ENCODE measurements at regions of chr3 and their contacts with region 1.

Region 1: DNA sequence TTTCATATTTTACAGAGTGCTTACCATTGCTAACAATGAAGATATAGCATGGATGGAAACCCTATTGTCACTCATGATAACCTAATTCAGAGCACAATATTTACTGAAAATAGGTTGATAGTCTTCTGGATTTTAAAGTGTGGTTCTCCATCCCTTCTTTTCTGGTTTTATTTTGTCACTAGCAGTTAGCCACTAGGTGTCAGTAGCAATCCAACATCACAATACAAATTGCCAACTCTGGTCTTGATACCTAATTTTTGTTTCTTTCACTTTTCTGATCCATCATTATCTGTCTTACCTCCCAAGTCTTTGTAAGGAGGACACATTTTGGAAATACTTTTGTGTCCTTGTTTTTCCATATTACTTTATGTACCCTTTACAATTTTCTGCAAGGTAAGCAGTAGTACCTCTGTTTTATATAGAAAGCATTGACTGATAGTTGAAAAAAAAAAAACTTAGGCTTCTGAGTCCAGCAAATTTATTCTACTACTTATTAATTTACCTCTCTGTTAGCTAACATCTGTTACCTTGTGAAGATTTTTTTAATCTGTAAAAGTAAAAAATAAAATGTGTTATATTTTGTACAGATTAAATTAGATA is 28.3 kb upstream of the CRYBG3 start:
- DNase-seq: peak; percentile 72
- H3K4me3 ChIP-seq: no peak overlapping the region
- H3K27ac ChIP-seq: no peak overlapping the region
- H3K4me1 ChIP-seq: no peaks in the 10 kb centered on the region
- H3K27me3 ChIP-seq: no peaks in the 10 kb centered on the region

Region 2: DNA sequence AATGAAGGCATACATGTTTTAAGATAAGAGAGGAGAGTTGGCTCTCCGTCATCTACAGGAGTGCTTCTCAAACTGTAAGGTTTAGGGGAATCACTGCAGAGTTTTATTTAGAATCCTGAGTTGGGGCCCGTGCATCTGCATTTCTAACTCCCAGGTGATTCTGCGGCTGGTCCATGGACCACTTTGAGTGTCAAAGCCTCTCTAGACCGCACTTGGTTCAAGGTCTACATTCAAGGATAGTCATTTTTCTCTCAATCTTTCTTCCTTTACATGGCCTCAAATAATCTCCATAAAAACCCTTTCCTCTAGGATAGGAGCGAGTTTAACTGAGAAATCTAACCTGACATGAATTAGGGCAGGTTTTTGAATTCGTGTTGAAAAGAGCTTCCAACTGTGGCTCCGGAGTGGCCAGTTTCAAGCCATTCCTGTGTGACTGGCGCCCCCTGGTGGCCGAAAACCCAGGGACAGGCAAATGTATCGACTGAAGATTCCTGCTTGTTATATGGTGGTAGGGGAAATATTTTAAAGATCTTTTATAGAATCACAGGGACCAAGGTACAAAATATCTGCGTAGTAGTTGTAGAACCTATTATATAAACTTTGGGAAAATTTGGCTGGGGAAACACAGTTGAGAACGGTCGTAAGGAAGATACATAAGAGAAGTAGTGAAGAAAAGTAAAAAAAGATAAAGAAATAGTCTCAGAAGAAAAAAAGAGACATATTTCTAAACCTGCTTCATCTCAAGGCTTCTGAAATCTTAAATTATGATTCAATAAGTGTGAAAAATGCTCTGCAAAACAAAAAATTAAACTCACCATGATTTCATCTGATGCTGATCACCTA is 229.7 kb after region 1 on chr3:
- in situ Hi-C with region 1: loop called (anchors 5 kb)
- DNase-seq: peak; percentile 73
- H3K4me3 ChIP-seq: no peak overlapping the region
- H3K27ac ChIP-seq: no peak overlapping the region
- H3K4me1 ChIP-seq: no peaks in the 10 kb centered on the region
- H3K27me3 ChIP-seq: no peaks in the 10 kb centered on the region

Region 3: DNA sequence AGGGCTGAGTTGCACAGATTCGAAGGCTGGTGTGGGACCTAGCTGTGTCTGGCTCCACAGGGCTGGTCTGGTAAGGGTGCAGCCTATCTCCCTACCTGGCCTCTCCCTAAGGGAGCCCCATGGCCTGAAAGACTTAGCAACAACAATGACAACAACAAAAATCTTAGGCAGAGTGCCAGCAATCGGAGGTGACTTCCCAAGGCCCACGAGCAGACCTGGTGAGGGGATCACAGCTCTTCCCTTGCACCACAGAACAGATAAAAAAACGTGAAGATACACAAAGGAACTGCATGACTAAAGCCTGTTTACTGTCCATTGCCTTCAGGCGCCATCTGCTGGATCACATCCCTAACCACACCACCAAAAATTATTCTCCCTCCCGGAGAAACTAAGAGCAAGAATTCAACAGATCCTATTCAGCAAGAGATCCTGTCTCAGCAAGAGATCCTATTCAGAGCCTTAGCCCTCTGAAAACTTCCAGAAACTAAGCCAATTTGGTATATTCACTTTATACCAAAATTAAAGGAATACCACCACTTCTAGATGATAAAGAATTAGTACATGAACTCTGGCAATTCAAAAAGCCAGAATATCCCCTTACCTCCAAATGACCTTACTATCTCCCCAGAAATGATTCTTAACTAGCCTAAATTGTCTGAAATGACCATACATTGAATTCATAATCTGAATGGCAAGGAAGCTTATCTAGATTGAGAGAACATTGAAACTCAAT is 536.0 kb after region 1 on chr3:
- in situ Hi-C with region 1: loop called (anchors 25 kb)
- DNase-seq: peak; percentile 73
- H3K4me3 ChIP-seq: no peak overlapping the region
- H3K27ac ChIP-seq: no peak overlapping the region
- H3K4me1 ChIP-seq: no peaks in the 10 kb centered on the region
- H3K27me3 ChIP-seq: peaks cover under 1% of the 10 kb centered on the region; the same call in 1 of the 2 replicates

Measured in GM23248 (cell line).